HEK293 (cell line): ENCODE measurements at regions of chr5 and their contacts with region 1.

Region 1: GRCh38 chr5:446864-447263 is 3.9 kb downstream of the EXOC3 start:
- H3K4me3 ChIP-seq: no peak overlapping the region
- H3K27ac ChIP-seq: no peak overlapping the region
- H3K4me1 ChIP-seq: peaks cover 10% of the 10 kb centered on the region
- CTCF ChIP-seq: peak; percentile 44

Region 2: DNA sequence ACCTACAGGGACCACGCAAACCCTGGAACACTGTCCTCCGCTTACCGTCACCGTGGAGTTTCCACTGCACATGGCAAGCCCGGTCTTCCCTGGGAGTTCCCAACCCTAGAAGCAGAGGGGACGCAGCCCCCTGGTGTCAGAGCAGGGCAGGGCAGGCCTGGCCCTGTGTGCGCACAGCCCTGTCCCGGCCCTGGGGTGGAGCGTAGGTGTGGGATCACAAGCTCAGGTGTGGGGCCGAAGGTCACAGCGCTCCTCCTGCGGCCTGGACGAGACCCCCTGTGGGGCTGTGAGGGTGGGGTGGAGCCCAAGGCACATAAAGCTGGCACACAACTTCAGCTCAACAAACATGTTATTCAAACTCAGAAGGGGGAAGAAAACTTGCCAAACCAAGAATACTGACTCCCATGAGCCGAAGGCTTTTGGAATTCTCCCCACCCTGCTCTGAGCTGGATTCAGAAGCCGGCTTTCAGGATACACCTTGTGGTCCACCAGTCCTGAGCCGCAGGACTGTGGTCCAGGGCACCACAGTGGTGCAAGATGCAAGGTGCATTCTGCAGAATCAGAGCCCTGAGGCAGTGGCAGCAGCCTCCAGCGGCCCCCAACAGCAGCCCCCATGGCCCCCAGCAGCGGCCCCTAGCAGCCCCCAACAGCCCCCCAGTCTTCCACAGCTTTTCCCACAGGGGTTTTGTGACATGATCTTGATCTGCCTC is 15.7 kb before region 1 on chr5:
- CTCF ChIA-PET with region 1: interaction called, 20 read pairs
- POLR2A ChIA-PET with region 1: interaction called, 3 read pairs
- H3K4me3 ChIP-seq: no peak overlapping the region
- H3K27ac ChIP-seq: no peak overlapping the region
- H3K4me1 ChIP-seq: no peaks in the 10 kb centered on the region
- CTCF ChIP-seq: peak; percentile 89

Region 3: DNA sequence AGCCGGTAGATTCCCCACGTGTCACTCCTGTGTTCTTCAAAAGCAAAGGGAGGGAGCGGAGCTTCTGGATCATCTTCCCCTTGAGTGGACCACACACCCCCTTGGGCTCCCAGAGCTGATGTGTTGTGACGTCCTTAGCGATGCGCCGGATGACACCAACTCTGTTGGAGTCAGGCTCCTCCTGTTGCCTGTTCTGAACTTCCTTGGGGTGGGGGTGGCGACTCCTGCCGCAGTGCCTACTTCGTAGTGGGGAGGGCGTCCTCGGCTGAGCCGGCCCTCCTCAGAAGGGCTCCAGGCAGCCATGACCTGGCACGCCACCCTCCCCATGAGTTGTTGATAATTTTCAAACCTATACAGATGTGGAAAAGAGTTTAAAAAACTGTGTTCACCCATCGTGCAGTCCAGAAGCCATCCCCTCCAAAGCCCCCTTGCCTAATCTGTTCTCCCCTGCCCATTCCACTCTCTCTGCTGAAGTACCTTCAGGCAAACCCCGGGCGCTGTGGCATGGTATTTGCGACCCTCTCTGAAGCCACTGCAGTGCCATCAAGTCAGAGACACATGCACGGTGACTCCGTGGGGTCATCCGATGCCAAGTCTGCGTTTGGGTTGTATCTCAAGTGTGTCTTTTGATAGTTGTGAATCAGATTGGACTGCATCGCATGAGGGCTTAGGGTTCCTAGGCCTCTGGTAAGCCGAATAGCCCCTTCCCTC is 12.9 kb after region 1 on chr5:
- CTCF ChIA-PET with region 1: interaction called, 10 read pairs
- POLR2A ChIA-PET with region 1: interaction called, 3 read pairs
- H3K4me3 ChIP-seq: no peak overlapping the region
- H3K27ac ChIP-seq: no peak overlapping the region
- H3K4me1 ChIP-seq: no peaks in the 10 kb centered on the region
- CTCF ChIP-seq: no peak